Left cardiac atrium (tissue), 4 donors: ENCODE measurements at regions of chr21 and their contacts with region 1.

Region 1: DNA sequence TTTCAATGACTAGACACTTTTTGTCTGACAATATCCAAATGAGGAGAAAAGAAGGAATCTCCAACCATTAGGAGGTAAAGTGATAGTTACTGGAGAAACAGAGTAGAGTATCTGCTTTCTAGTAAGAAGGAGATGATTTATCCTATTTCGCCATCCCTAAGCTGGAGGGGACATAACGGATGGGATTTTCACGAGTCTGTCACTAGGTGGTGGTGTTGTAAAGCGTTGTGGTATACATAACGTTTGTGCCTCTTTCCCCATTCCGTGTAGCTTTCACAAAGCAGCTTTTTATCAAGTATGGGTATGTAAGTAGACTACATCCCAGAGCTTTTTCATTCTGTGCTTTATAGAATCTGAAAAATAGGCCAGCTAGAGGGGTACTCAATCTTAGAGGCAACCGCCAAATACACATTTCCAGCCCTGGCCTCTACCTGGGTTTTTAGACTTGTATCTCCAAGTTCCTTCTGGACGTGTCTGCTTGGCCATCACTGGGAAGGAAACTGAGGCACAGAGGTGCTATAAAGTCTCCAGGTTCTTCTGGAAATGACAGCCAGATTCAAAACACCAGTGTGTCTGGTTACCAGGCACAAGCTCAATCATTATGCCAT is 33.3 kb upstream of the FAM3B start:
- DNase-seq: no peak
- ATAC-seq: peak; percentile 88 to 95

Region 2: DNA sequence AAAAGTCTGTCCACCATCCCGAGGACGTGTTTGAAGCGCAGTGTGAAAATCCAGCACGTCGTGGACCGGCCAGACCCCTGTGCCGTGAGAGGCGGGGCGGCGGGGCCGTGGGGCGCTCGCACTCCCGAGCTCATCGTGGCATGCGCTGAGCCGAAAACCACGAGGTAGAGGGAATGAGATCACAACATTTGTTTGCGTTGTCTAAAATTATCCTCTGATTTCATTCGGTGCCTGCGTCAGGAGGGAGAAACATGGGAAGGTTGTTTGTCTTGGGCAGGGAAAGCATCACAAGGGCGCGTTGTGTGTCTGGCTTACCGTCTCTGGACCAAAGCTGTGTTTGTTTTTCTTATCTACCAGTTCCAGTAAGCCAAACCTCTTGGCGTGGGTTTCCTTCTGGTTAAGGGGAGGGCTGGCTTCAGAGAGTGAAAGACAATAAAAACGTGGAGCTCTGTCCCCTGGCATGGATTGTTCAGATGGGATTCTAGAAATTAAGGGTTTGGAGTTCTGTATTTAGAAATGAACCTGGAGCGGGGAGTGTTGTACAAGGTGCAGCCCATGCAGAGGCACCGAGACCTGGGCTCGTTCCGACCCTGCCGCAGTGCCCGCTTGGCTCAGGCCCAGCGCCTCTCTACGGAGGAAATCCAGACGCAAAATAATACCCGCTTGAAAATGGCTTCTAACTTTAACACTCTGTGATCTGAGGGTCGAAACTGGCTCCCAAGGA is 35.6 kb before region 1 on chr21:
- intact Hi-C with region 1: no loop called
- DNase-seq: peak; percentile 74
- ATAC-seq: peak; percentile 78 to 79

Region 3: GRCh38 chr21:41338455-41338854 is 55.1 kb after region 1 on chr21:
- intact Hi-C with region 1: no loop called
- DNase-seq: no peak
- ATAC-seq: no peak

Region 4: DNA sequence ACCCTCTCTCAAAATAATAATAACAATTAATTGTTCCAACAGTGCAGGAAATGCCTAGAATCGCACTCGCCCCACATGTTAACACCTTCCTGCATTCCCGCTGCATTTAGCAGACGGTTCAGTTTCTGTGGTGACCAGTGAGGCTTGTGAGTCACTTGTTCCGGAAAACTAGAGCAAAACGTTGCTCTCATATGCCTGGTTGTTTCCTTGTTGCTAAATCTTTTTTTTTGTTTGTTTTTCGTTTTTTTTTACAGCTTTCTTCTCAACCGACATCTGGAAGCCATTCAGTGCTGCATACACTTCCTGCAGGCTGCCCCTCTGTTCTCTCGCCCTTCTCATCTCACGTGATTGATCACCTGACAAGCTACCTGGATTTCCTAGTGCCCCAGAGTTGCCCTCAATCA is 281.6 kb after region 1 on chr21:
- intact Hi-C with region 1: no loop called
- DNase-seq: no peak
- ATAC-seq: no peak

Region 5: GRCh38 chr21:41601573-41602368 is 318.5 kb after region 1 on chr21:
- intact Hi-C with region 1: loop called in 1 of 2 experiments (anchors 10 kb)
- DNase-seq: no peak
- ATAC-seq: peak; percentile 29 to 32